Endothelial cell of umbilical vein (primary cell): ENCODE measurements at regions of chr5 and their contacts with region 1.

Region 1: DNA sequence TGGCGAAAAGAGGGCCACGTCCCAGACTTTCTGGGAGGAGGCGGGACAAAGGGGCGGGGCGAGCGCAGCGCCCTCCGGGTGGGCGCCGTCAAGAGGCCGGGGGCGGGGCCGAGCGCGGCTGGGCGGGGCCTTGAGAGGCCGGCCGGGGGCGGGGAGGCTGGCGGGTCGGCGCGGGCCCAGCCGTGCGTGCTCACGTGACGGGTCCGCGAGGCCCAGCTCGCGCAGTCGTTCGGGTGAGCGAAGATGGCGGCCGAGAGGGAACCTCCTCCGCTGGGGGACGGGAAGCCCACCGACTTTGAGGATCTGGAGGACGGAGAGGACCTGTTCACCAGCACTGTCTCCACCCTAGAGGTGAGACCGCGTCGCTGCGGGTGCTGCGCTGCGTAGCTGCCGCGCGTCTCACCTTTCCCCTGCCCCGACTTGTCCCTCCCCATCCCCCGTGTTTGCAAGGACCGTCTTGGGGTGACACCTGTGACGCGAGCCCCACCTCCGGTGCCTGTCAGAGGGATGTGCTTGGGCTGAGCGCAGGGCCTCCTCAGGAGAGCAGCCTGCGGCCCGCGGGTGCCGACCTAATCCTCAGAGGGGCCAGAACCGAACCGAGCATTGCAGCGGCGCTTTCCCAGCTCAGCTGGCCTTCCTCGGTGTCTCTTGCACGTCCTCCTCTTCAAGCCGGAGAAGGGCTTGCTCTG is at the start of gene SNX2:
- DNase-seq: peak; percentile 89
- H3K4me3 ChIP-seq: peak within 1 kb of the TSS; percentile 84 to 88 (median 86)
- H3K27ac ChIP-seq: peak within 1 kb of the TSS; percentile 44
- H3K4me1 ChIP-seq: peaks cover 18% of the 10 kb centered on the region
- H3K27me3 ChIP-seq: peaks cover 2 to 7% of the 10 kb centered on the region in 2 experiments
- CTCF ChIP-seq: peak in 1 of 2 donors; percentile 18
- POLR2A ChIP-seq: peak; percentile 62
- total RNA-seq, gene SNX2: 46.3 and 51.2 TPM in 2 replicates

Region 2: DNA sequence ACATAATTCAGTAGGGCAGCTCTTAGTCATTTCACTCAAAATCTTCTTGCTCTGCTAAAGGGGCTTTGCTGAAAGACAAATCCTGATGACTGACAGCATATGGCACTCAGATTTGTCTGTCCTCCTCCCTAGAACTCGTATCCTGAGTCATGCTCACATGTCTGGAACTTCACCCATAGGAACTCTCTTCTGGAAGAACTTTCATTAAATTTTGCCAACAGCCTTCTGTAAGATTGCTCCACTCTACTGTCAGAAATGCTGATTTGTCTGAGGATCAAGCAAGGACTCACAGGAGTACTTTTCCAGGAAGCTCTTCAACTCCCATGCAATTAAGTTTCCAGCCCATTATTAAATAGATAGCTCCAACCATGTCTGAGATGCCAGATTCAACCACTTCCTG is 59.9 kb before region 1 on chr5:
- CTCF ChIA-PET with region 1: no interaction called
- POLR2A ChIA-PET with region 1: no interaction called
- dilution Hi-C with region 1: no loop called
- intact Hi-C with region 1: loop called (anchors 2 kb)
- DNase-seq: no peak
- H3K4me3 ChIP-seq: no peak overlapping the region
- H3K27ac ChIP-seq: no peak overlapping the region
- H3K4me1 ChIP-seq: peaks cover 6% of the 10 kb centered on the region
- H3K27me3 ChIP-seq: peaks cover 0 to 1% of the 10 kb centered on the region in 2 experiments
- CTCF ChIP-seq: no peak
- POLR2A ChIP-seq: no peak

Region 3: DNA sequence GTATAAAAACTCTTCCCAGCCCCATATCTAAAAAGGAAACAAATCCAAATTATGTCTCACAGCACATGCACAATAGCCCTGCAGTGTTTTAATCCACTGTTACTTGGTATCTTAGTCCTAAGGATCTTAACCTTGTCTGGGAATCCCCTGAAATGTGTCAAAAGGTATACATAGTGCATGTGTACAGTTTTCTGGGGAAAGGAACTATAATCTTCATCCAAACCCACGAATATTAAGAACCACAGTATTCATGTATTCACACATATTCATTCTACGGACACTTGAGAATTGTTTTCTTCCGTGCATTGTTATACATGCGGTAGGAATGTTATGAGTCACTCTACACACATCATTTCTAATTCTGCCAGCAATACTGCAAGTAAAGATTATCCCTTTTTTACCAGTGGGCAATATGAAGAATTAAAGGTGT is 47.9 kb before region 1 on chr5:
- CTCF ChIA-PET with region 1: no interaction called
- POLR2A ChIA-PET with region 1: no interaction called
- dilution Hi-C with region 1: no loop called
- intact Hi-C with region 1: loop called (anchors 1 kb)
- DNase-seq: peak; percentile 89
- H3K4me3 ChIP-seq: no peak overlapping the region
- H3K27ac ChIP-seq: peak overlapping the region; percentile 72
- H3K4me1 ChIP-seq: peaks cover 20% of the 10 kb centered on the region
- H3K27me3 ChIP-seq: no peaks in the 10 kb centered on the region
- CTCF ChIP-seq: no peak
- POLR2A ChIP-seq: no peak

Region 4: GRCh38 chr5:122751293-122751753 is 23.7 kb before region 1 on chr5:
- CTCF ChIA-PET with region 1: interaction called, 3 read pairs
- POLR2A ChIA-PET with region 1: no interaction called
- dilution Hi-C with region 1: no loop called
- intact Hi-C with region 1: loop called (anchors 1 kb)
- DNase-seq: peak; percentile 84
- H3K4me3 ChIP-seq: no peak overlapping the region
- H3K27ac ChIP-seq: no peak overlapping the region
- H3K4me1 ChIP-seq: peaks cover 6% of the 10 kb centered on the region
- H3K27me3 ChIP-seq: peaks cover 0 to 1% of the 10 kb centered on the region in 2 experiments
- CTCF ChIP-seq: no peak
- POLR2A ChIP-seq: no peak

Region 5: DNA sequence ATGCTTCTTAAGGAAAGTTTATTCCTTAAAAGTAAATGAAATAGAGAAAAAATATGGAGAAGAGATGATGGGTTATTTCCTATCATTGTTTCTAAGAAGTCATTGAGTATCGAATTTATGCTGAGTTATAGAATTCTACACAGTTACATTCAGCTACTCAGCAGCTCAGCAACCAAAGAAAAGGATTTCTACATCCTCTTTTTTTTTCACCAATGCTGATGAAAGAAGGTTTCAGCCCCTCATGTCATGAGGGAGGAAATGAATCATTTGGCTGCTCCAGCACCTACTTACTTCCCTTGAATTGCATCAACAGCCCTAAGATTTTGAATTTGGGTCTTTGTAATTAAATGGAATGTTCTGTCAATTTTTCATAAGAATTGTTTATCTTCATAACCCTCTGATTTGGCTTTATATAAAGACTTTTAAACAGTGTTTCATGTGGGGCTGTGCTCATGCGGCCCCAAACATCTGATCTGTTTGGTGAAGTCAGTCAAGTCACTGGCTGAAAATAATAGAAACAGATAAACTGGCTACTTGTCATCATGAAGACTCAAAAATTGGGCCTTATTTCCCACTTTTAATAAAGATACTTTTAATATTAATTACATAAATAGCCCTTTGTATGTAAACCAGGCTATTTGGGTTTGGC is 18.6 kb before region 1 on chr5:
- CTCF ChIA-PET with region 1: interaction called, 3 read pairs
- POLR2A ChIA-PET with region 1: no interaction called
- dilution Hi-C with region 1: no loop called
- intact Hi-C with region 1: loop called (anchors 1 kb)
- DNase-seq: peak; percentile 83
- H3K4me3 ChIP-seq: no peak overlapping the region
- H3K27ac ChIP-seq: peak overlapping the region; percentile 44
- H3K4me1 ChIP-seq: peaks cover 12% of the 10 kb centered on the region
- H3K27me3 ChIP-seq: no peaks in the 10 kb centered on the region
- CTCF ChIP-seq: no peak
- POLR2A ChIP-seq: no peak

Region 6: GRCh38 chr5:122790354-122791103 is 15.5 kb after region 1 on chr5:
- CTCF ChIA-PET with region 1: no interaction called
- POLR2A ChIA-PET with region 1: no interaction called
- dilution Hi-C with region 1: no loop called
- intact Hi-C with region 1: no loop called
- DNase-seq: no peak
- H3K4me3 ChIP-seq: no peak overlapping the region
- H3K27ac ChIP-seq: no peak overlapping the region
- H3K4me1 ChIP-seq: no peaks in the 10 kb centered on the region
- H3K27me3 ChIP-seq: no peaks in the 10 kb centered on the region
- CTCF ChIP-seq: no peak
- POLR2A ChIP-seq: no peak

Region 7: GRCh38 chr5:122845229-122846050 is 70.4 kb after region 1 on chr5 and contains the start of gene SNX24:
- CTCF ChIA-PET with region 1: no interaction called
- POLR2A ChIA-PET with region 1: no interaction called
- dilution Hi-C with region 1: no loop called
- intact Hi-C with region 1: loop called (anchors 1 kb)
- DNase-seq: peak; percentile 71
- H3K4me3 ChIP-seq: peak within 1 kb of the TSS; percentile 76 to 95 (median 93)
- H3K27ac ChIP-seq: peak within 1 kb of the TSS; percentile 0
- H3K4me1 ChIP-seq: peaks cover 18% of the 10 kb centered on the region
- H3K27me3 ChIP-seq: no peaks in the 10 kb centered on the region
- CTCF ChIP-seq: no peak
- POLR2A ChIP-seq: peak; percentile 73
- total RNA-seq, gene SNX24: 8.8 and 14.9 TPM in 2 replicates

Region 8: DNA sequence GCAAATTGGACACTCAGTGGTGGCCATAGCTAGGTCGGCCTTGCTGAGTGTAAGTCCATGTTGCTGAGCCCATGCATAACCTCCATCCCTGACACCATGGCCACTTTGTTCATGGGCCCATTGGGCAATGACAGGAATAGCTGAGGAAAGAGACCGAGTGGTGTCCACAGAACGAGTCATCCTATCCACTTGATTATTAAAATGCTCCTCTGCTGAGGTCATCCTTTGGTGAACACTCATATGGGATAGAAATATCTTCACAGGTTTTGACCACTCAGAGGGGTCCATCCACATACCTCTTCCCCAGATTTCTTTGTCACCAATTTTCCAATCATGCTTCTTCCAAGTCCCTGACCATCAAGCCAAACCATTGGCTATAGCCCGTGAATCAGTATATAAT is 197.9 kb after region 1 on chr5:
- CTCF ChIA-PET with region 1: no interaction called
- POLR2A ChIA-PET with region 1: no interaction called
- dilution Hi-C with region 1: no loop called
- intact Hi-C with region 1: no loop called
- DNase-seq: no peak
- H3K4me3 ChIP-seq: no peak overlapping the region
- H3K27ac ChIP-seq: no peak overlapping the region
- H3K4me1 ChIP-seq: no peaks in the 10 kb centered on the region
- H3K27me3 ChIP-seq: no peaks in the 10 kb centered on the region
- CTCF ChIP-seq: no peak
- POLR2A ChIP-seq: no peak